GM12878 (cell line): ENCODE measurements at regions of chr2 and their contacts with region 1.

Region 1: DNA sequence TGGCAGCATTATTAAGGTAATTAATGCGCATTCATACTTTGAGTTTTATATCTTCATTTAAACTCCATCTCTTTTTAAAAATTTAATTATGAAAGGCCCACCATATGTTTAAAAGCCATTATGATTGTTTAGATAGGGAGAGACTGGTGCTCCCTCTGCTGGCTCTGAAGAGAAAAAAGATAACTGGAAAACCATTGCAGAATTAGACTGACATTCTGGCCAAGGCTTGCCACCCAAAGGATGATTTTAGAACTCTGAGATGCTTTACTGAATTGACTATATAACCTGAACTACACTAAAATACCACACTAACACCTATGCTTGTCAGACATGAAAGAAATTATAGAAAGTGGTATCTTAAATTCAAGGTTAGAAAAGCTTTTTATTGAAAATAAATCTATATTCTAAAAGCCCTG is 127.6 kb upstream of the SPOPL start:
- DNase-seq: peak; percentile 12
- ATAC-seq: peak; percentile 72
- H3K4me3 ChIP-seq: no peak overlapping the region
- H3K27ac ChIP-seq: no peak overlapping the region
- H3K4me1 ChIP-seq: no peaks in the 10 kb centered on the region
- H3K27me3 ChIP-seq: no peaks in the 10 kb centered on the region
- CTCF ChIP-seq: peak; percentile 49 to 66 (median 59)
- EP300 ChIP-seq: no peak
- POLR2A ChIP-seq: no peak
- RAD21 ChIP-seq: peak; percentile 86

Region 2: GRCh38 chr2:138090330-138090729 is 283.7 kb before region 1 on chr2:
- CTCF ChIA-PET with region 1: interaction called, 18 read pairs
- POLR2A ChIA-PET with region 1: no interaction called
- RAD21 ChIA-PET with region 1: interaction called, 3 read pairs
- SMC1A ChIA-PET with region 1: interaction called, 6 read pairs
- in situ Hi-C with region 1: no loop called
- intact Hi-C with region 1: loop called (anchors 1 kb)
- DNase-seq: no peak
- ATAC-seq: peak; percentile 98
- H3K4me3 ChIP-seq: no peak overlapping the region
- H3K27ac ChIP-seq: no peak overlapping the region
- H3K4me1 ChIP-seq: no peaks in the 10 kb centered on the region
- H3K27me3 ChIP-seq: no peaks in the 10 kb centered on the region
- CTCF ChIP-seq: peak; percentile 56 to 73 (median 58); a peak in 5 of 6 replicates
- EP300 ChIP-seq: no peak
- POLR2A ChIP-seq: no peak
- RAD21 ChIP-seq: peak; percentile 75